ENCODE measurements at regions of chr16 and their contacts with region 1.

Region 1: DNA sequence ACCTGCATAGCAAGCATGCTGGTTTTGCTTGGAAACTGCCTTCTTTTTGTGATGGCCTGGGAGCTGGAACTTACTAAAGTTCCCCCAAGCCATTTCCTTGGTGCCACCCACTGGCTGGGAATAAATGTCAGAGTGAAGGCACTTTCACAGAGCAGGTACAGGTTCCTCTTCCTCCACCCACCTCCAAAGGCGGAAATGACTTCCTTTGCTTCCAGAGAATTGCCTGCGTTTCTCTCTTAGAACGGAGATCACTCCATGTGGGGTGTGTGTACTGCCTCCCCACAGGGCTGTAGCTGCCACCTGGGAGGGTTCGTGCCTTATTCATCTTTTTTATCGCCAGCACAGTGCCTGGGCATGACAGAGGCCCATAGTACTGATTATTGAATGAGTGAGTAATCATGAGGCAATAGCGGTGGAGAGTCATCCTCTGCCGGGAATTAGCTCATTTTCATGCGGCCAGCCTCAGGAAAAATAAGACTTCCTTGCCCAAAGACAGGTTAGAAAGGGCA is 32.2 kb upstream of the HAS3 start:
- DNase-seq: peak; percentile 96
- ATAC-seq: peak; percentile 93
- H3K4me3 ChIP-seq: no peak overlapping the region
- H3K27ac ChIP-seq: peak overlapping the region; percentile 98
- H3K4me1 ChIP-seq: peaks cover 49% of the 10 kb centered on the region
- H3K27me3 ChIP-seq: no peaks in the 10 kb centered on the region
- CTCF ChIP-seq: no peak; the same call in 1 of the 2 replicates

Region 2: DNA sequence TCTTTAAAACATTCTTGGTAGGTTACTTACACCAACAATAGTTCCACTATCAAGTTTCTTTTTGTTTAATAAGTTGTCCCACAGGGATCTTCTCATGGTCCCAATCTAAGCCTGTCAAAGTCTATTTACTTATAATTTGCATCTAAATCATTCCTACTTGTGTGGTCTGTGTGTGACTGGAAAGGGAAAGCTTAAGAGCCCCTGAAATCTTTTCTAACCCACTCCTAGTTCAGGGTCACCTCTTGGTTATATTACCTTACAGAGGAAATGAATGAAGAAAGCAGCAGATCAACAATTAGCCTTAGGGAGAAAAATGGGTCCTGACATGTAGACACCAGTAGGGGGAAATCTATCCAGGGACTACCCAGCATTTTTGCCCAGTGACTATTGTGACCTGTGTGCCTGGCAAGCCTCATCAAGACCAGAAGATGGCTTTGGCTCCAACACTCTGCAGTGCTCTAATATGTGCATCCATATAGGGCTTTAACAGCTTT is 78.2 kb before region 1 on chr16:
- CTCF ChIA-PET with region 1: no interaction called
- POLR2A ChIA-PET with region 1: interaction called, 3 read pairs
- intact Hi-C with region 1: loop called (anchors 1 kb)
- DNase-seq: peak; percentile 70
- ATAC-seq: peak; percentile 20; the same call in 1 of the 2 replicates
- H3K4me3 ChIP-seq: no peak overlapping the region
- H3K27ac ChIP-seq: peak overlapping the region; percentile 96
- H3K4me1 ChIP-seq: peaks cover 41% of the 10 kb centered on the region
- H3K27me3 ChIP-seq: no peaks in the 10 kb centered on the region
- CTCF ChIP-seq: peak; percentile 58

Region 3: DNA sequence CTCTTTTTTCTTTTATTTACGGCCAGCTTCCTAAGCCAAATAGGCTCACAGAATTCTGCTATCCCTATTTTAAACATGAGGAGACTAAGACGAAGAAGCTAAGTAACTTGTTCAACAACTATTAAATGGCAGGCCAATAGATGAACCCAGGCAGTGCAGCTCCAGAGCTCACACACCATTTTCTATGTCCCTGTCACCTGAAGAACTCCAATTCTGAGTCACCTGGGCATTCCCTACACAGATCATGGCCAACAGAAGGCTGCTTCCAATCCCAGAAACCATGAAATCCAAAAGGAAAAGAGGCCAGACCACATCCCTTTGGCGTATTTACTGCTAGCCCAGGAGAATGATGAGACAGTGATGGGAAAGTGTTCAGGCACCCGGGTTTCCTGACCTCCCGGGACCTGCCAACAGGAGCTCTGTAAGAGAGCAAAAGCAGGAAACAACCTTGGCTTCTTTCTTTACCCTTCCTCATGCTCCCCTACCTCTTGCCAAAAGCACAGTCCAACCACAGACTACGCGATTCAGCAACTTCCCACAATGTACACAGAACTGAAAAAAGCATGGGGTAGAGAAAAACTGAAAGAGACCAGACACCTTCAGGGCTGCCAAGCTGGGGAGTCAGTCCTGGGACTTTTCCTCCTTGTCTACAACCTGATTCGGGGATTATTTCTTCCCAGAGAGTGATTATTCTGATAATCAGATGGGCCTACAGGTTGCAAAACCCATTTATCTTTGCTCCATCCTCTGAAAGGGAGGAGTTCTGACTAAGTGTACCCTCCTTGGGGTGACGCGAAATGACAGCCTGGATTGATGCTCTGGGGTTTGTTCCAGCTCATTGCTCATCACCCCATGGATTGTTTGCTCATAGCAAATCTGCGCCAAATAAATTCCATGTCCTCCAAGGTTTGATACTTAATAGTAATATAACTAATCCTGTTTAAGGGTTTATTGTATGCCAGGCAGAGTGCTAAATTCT is 15.5 kb before region 1 on chr16:
- CTCF ChIA-PET with region 1: no interaction called
- POLR2A ChIA-PET with region 1: interaction called, 10 read pairs
- intact Hi-C with region 1: loop called (anchors 2 kb)
- DNase-seq: peak; percentile 93
- ATAC-seq: peak; percentile 91
- H3K4me3 ChIP-seq: peak overlapping the region; percentile 21; the same call in 1 of the 2 replicates
- H3K27ac ChIP-seq: peak overlapping the region; percentile 99
- H3K4me1 ChIP-seq: peaks cover 29% of the 10 kb centered on the region
- H3K27me3 ChIP-seq: no peaks in the 10 kb centered on the region
- CTCF ChIP-seq: no peak

Region 4: DNA sequence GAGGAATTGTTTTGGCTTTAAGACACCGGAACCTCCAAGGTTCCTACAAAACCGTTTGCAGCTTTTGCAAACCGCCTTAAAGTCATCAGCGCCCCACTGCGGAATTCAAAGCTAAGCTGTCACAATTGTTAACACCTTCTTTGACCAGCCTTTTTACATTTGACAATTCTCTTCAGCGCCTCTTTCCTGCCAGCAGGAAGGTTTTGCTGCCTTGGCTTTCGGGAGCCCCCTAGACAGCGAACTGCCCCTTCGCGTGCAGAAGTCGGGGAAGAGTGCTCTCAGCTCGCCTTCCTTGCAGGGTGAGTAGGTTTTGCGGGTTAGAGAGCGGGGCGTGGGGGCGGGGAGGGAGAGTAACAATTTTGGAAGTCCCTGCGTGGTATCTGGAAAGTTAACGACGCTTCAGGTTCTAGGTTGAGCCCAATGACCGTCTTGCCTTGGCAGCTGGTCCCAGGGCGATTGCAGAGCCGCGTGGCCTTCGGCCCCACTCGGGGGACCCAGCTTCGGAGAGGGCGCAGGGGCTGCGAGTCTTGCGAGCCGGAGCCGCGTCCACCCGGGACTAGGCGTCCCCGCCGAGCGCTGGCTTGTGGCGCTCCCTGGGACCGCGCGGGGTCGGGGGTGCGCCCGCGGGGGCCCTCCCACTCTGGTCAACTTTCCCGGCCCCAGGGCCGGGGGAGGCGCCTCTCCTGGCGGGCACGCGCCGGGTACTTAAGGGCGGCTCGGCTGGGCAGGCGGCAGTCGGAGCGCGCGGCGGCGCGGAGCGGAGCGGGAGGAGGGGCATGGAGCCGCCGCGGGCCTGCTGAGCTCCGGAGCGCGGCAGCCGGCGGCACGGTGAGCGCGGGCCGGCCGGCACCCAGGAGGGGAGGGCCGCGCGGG is 32.5 kb after region 1 on chr16 and contains the start of gene HAS3:
- CTCF ChIA-PET with region 1: no interaction called
- POLR2A ChIA-PET with region 1: interaction called, 5 read pairs
- intact Hi-C with region 1: loop called (anchors 1 kb)
- DNase-seq: peak; percentile 75
- ATAC-seq: peak; percentile 67
- H3K4me3 ChIP-seq: peak within 1 kb of the TSS; percentile 98
- H3K27ac ChIP-seq: peak within 1 kb of the TSS; percentile 83
- H3K4me1 ChIP-seq: peaks cover 33% of the 10 kb centered on the region
- H3K27me3 ChIP-seq: no peaks in the 10 kb centered on the region
- CTCF ChIP-seq: peak; percentile 62
- total RNA-seq, gene HAS3: 92.5 and 153 TPM in 2 replicates

Region 5: GRCh38 chr16:69204172-69204571 is 131.0 kb after region 1 on chr16:
- CTCF ChIA-PET with region 1: no interaction called
- POLR2A ChIA-PET with region 1: no interaction called
- intact Hi-C with region 1: no loop called
- DNase-seq: no peak
- ATAC-seq: no peak
- H3K4me3 ChIP-seq: no peak overlapping the region
- H3K27ac ChIP-seq: no peak overlapping the region
- H3K4me1 ChIP-seq: peaks cover 19% of the 10 kb centered on the region
- H3K27me3 ChIP-seq: no peaks in the 10 kb centered on the region
- CTCF ChIP-seq: no peak